ENCODE measurements at regions of chr2 and their contacts with region 1.

Region 1: DNA sequence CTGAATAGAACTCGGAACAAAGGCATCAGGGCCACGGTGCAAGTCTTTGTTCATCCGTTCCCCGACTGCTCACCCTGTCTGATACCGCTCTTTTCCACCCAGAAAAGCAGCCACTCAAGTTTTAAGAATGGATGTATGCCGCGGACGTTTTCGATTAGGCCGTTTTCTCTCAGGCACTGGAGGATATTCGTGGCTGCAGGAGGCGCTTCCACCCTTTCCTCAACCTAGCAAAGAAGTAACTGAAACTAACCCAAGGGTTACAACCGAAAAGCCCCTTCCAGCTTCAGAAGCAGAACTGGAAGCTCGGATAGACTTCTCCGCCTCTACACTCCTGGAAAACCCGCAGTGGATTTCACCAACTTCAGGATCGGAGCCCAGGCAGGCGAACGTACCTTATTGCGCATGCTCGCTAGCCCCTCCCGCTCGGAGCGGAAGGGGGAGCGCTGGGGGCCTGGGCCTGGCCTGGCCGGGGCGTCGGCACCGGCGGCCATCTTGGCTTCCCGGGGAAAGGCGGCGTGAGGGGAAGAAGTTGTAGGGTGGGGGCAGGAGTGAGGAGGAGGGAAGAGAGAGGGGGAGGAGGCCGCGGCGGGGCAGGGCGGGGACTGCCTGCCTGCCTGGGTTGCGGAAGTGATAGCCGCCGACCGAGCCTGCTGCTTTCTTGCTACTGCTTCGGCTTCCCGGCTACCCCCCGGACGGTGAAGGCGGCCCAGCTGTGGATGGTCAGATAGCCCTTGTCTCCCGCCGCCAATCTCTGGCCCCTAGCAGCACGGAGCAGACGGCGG is at the start of gene ACTR3:
- DNase-seq: peak; percentile 97 to 98
- H3K4me3 ChIP-seq: peak within 1 kb of the TSS; percentile 67 to 96 (median 72)
- H3K27ac ChIP-seq: peak within 1 kb of the TSS; percentile 95 to 100 (median 98)
- H3K4me1 ChIP-seq: peaks cover 13 to 39% of the 10 kb centered on the region in 2 donors
- H3K27me3 ChIP-seq: no peaks in the 10 kb centered on the region
- CTCF ChIP-seq: peak in 1 of 6 experiments; percentile 5
- POLR2A ChIP-seq: peak; percentile 18 to 88
- total RNA-seq, gene ACTR3: 83.9 to 126 (median 102) TPM

Region 2: GRCh38 chr2:113762377-113763118 is 127.1 kb before region 1 on chr2:
- intact Hi-C with region 1: loop called (anchors 10 kb)
- DNase-seq: no peak
- H3K4me3 ChIP-seq: no peak overlapping the region
- H3K27ac ChIP-seq: no peak overlapping the region
- H3K4me1 ChIP-seq: no peaks in the 10 kb centered on the region
- H3K27me3 ChIP-seq: no peaks in the 10 kb centered on the region
- CTCF ChIP-seq: no peak
- POLR2A ChIP-seq: no peak

Region 3: GRCh38 chr2:113826346-113827285 is 63.0 kb before region 1 on chr2:
- intact Hi-C with region 1: loop called (anchors 10 kb)
- DNase-seq: no peak
- H3K4me3 ChIP-seq: no peak overlapping the region
- H3K27ac ChIP-seq: no peak overlapping the region
- H3K4me1 ChIP-seq: no peaks in the 10 kb centered on the region
- H3K27me3 ChIP-seq: no peaks in the 10 kb centered on the region
- CTCF ChIP-seq: no peak
- POLR2A ChIP-seq: no peak

Region 4: GRCh38 chr2:113842919-113843736 is 46.5 kb before region 1 on chr2:
- intact Hi-C with region 1: no loop called
- DNase-seq: no peak
- H3K4me3 ChIP-seq: no peak overlapping the region
- H3K27ac ChIP-seq: no peak overlapping the region
- H3K4me1 ChIP-seq: no peaks in the 10 kb centered on the region
- H3K27me3 ChIP-seq: no peaks in the 10 kb centered on the region
- CTCF ChIP-seq: no peak
- POLR2A ChIP-seq: no peak